Mucosa of descending colon (tissue), 3 donors: ENCODE measurements at regions of chr2 and their contacts with region 1.

Region 1: GRCh38 chr2:21123473-21124393 is at the start of gene TDRD15:
- DNase-seq: no peak
- ATAC-seq: no peak
- H3K4me3 ChIP-seq: no peak within 1 kb of the TSS
- H3K4me1 ChIP-seq: no peaks in the 10 kb centered on the region
- CTCF ChIP-seq: no peak
- total RNA-seq, gene TDRD15: not detected

Region 2: GRCh38 chr2:21042958-21043743 is 80.6 kb before region 1 on chr2:
- intact Hi-C with region 1: loop called in 1 of 2 experiments (anchors 5 kb)
- DNase-seq: peak; percentile 60 to 64 (median 63)
- ATAC-seq: peak; percentile 76
- H3K4me3 ChIP-seq: no peak overlapping the region
- H3K4me1 ChIP-seq: no peaks in the 10 kb centered on the region
- CTCF ChIP-seq: peak; percentile 89